Calu3 (cell line): ENCODE measurements at regions of chr11 and their contacts with region 1.

Region 1: DNA sequence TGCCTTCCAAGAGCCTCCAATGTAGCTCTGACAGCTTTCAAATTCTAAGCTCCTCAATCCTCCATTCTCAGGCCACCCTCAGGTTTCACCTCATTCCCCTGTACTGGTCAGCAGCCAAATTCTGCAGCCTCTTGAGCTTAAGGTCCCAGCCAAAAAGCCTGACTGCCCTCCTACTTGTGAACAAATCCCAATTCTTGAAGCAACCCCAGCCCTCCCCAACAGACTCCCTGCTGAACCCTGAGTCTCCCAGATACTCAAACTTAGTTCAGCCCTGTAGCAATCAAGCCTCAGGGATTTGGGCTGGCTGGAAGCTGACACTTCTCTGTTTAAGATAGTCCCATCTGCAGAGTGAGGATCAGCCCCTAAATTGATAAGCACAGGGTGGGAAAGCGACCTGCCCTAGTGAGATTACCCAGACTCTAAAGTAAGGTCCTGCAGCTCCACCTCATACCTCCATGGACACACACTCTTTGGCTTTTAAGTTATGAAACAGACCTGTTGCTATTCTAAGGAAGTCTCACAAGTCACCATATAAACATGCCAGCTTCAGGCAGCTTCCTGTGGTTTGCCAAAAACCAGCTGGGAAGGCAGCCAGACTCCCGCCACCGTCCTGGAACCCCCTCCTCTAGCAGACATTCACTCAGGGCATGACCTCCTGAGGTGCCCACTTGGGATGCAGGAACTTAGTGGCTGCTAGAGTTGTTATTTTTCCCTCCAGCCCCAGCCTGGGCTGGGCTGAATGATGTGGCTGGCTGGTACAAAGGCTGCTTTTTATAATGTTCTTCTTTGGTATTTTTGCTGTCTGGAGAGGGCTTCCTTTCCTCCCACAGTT is 82.5 kb upstream of the PICALM start:
- DNase-seq: peak; percentile 59
- H3K4me3 Mint-ChIP-seq: peak overlapping the region; percentile 23
- H3K27ac Mint-ChIP-seq: peak overlapping the region; percentile 94
- H3K4me1 Mint-ChIP-seq: peaks cover 57% of the 10 kb centered on the region
- H3K27me3 Mint-ChIP-seq: no peaks in the 10 kb centered on the region
- CTCF ChIP-seq: no peak

Region 2: DNA sequence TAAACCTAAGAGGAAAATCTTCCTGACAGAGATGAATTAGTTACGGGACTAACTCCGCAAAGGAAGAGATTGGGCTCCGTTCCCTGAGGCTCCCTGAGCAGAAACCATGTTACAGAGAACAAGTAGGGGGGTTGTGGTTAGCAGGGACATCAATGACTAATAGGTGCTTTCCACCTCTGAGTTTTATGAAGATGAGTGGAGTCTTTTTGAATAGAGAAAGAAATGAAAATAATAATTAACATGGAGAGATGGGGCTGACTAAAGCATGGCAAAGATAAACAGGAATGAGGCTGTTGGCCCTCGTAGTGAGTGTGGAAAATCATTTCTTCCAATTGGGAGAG is 35.0 kb before region 1 on chr11:
- CTCF ChIA-PET with region 1: no interaction called
- intact Hi-C with region 1: loop called (anchors 5 kb)
- DNase-seq: peak; percentile 23
- H3K4me3 Mint-ChIP-seq: peak overlapping the region; percentile 57
- H3K27ac Mint-ChIP-seq: peak overlapping the region; percentile 98
- H3K4me1 Mint-ChIP-seq: peaks cover 56% of the 10 kb centered on the region
- H3K27me3 Mint-ChIP-seq: no peaks in the 10 kb centered on the region
- CTCF ChIP-seq: no peak

Region 3: DNA sequence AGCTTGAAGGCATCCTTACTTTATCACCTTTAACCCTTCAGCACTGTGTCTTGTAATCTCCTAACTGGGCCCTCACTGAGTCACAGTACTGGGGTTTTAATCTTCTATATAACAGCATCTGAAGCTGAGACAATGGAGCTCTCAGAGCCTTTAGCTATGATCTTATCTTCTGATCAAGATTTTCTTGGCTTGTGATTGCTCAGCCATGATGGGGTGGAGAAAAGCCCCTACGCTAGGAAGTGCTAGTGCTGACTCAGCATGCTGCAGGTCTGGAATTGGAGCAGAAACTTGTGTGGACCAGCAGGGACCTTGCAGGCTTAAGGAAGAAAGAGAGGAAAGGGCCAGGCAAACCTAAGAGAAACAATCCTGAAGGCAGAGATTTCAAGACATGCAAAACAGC is 21.5 kb after region 1 on chr11:
- CTCF ChIA-PET with region 1: interaction called, 3 read pairs
- intact Hi-C with region 1: loop called (anchors 2 kb)
- DNase-seq: no peak
- H3K4me3 Mint-ChIP-seq: no peak overlapping the region
- H3K27ac Mint-ChIP-seq: no peak overlapping the region
- H3K4me1 Mint-ChIP-seq: peaks cover 7% of the 10 kb centered on the region
- H3K27me3 Mint-ChIP-seq: no peaks in the 10 kb centered on the region
- CTCF ChIP-seq: no peak

Region 4: GRCh38 chr11:86193297-86194095 is 42.1 kb after region 1 on chr11:
- CTCF ChIA-PET with region 1: interaction called, 4 read pairs
- intact Hi-C with region 1: loop called (anchors 1 kb)
- DNase-seq: peak; percentile 67
- H3K4me3 Mint-ChIP-seq: peak overlapping the region; percentile 27
- H3K27ac Mint-ChIP-seq: peak overlapping the region; percentile 92
- H3K4me1 Mint-ChIP-seq: peaks cover 27% of the 10 kb centered on the region
- H3K27me3 Mint-ChIP-seq: no peaks in the 10 kb centered on the region
- CTCF ChIP-seq: peak; percentile 27